ENCODE measurements at regions of chr7 and their contacts with region 1.

Region 1: GRCh38 chr7:158856883-158857668 is 718 bp downstream of the DYNC2I1 start:
- DNase-seq: peak; percentile 19
- H3K4me3 ChIP-seq: peak overlapping the region; percentile 38 to 77 (median 63)
- H3K27ac ChIP-seq: no peak overlapping the region
- H3K4me1 ChIP-seq: peaks cover 12% of the 10 kb centered on the region
- H3K27me3 ChIP-seq: no peaks in the 10 kb centered on the region
- CTCF ChIP-seq: no peak
- POLR2A ChIP-seq: no peak

Region 2: DNA sequence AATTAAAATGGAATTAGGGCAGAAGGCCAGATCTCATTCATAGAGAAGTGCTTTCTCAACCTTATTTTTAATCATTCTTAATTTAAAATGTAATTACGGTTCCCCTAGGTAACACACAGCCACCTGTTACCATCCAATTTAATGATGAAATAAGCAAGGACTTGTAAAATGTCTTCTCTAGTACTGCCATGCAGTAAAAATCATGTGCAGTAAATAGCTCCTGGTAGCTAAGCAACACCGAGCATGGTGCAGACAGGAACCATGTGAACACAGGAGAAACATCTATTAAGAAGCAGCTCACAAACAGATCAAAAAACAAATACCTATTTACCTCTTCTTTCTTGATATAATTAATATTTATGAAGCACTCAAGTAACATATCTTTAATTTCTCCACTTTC is 167.6 kb before region 1 on chr7:
- CTCF ChIA-PET with region 1: no interaction called
- POLR2A ChIA-PET with region 1: no interaction called
- dilution Hi-C with region 1: no loop called
- intact Hi-C with region 1: no loop called
- DNase-seq: no peak
- H3K4me3 ChIP-seq: no peak overlapping the region
- H3K27ac ChIP-seq: no peak overlapping the region
- H3K4me1 ChIP-seq: no peaks in the 10 kb centered on the region
- H3K27me3 ChIP-seq: no peaks in the 10 kb centered on the region
- CTCF ChIP-seq: no peak
- POLR2A ChIP-seq: no peak

Region 3: GRCh38 chr7:158704704-158705468 is 152.2 kb before region 1 on chr7 and contains the start of gene NCAPG2:
- CTCF ChIA-PET with region 1: no interaction called
- POLR2A ChIA-PET with region 1: no interaction called
- dilution Hi-C with region 1: no loop called
- intact Hi-C with region 1: loop called (anchors 1 kb)
- DNase-seq: peak; percentile 98
- H3K4me3 ChIP-seq: peak within 1 kb of the TSS; percentile 87 to 100 (median 89)
- H3K27ac ChIP-seq: peak within 1 kb of the TSS; percentile 78
- H3K4me1 ChIP-seq: peaks cover 24% of the 10 kb centered on the region
- H3K27me3 ChIP-seq: no peaks in the 10 kb centered on the region
- CTCF ChIP-seq: no peak
- POLR2A ChIP-seq: peak; percentile 45
- total RNA-seq, gene NCAPG2: 62.3 and 66.9 TPM in 2 replicates

Region 4: GRCh38 chr7:158782761-158783401 is 74.2 kb before region 1 on chr7:
- CTCF ChIA-PET with region 1: interaction called, 6 read pairs
- POLR2A ChIA-PET with region 1: no interaction called
- dilution Hi-C with region 1: no loop called
- intact Hi-C with region 1: loop called (anchors 1 kb)
- DNase-seq: peak; percentile 80
- H3K4me3 ChIP-seq: no peak overlapping the region
- H3K27ac ChIP-seq: peak overlapping the region; percentile 4
- H3K4me1 ChIP-seq: peaks cover 12% of the 10 kb centered on the region
- H3K27me3 ChIP-seq: no peaks in the 10 kb centered on the region
- CTCF ChIP-seq: peak; percentile 48 to 53
- POLR2A ChIP-seq: no peak

Region 5: GRCh38 chr7:158868476-158869420 is 11.7 kb after region 1 on chr7:
- CTCF ChIA-PET with region 1: no interaction called
- POLR2A ChIA-PET with region 1: no interaction called
- dilution Hi-C with region 1: no loop called
- intact Hi-C with region 1: no loop called
- DNase-seq: no peak
- H3K4me3 ChIP-seq: no peak overlapping the region
- H3K27ac ChIP-seq: no peak overlapping the region
- H3K4me1 ChIP-seq: peaks cover 4% of the 10 kb centered on the region
- H3K27me3 ChIP-seq: no peaks in the 10 kb centered on the region
- CTCF ChIP-seq: no peak
- POLR2A ChIP-seq: no peak

Region 6: GRCh38 chr7:158891922-158892321 is 34.8 kb after region 1 on chr7:
- CTCF ChIA-PET with region 1: no interaction called
- POLR2A ChIA-PET with region 1: no interaction called
- dilution Hi-C with region 1: no loop called
- intact Hi-C with region 1: no loop called
- DNase-seq: no peak
- H3K4me3 ChIP-seq: no peak overlapping the region
- H3K27ac ChIP-seq: no peak overlapping the region
- H3K4me1 ChIP-seq: no peaks in the 10 kb centered on the region
- H3K27me3 ChIP-seq: no peaks in the 10 kb centered on the region
- CTCF ChIP-seq: no peak
- POLR2A ChIP-seq: no peak

Measured in endothelial cell of umbilical vein (primary cell).